ENCODE measurements at regions of chr2 and their contacts with region 1.

Region 1: DNA sequence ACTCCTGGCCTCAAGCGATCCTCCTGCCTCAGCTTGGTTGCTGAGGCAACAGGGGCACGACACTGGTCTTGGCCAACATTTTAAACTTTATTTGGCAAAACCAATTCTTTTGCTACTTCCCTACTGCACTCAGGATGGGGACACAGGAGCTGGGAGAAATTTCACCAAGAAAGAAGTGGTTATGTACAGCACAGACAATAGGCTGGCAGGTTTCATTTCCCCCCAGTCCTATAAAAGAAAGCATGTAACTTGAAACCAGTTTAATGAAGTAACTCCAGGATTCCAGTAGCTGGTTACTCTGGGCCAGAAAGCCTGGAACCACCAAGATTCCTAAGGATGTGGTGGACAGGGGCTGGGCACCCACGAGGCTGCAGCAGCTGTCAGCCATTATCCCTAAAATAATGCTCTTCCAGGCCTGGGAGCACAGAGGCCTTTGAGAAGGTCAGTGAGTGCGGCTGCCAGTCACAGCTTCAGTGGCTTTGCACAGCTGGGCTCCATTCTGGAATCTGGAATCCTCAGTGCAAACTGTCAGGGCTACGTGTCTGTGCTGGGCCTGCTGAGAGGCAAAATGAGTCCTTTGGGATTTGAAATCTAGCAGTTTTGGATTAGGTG is 142.3 kb upstream of the ITGA6 start:
- DNase-seq: peak; percentile 28
- H3K4me3 ChIP-seq: no peak overlapping the region
- H3K27ac ChIP-seq: peak overlapping the region; percentile 26
- H3K4me1 ChIP-seq: peaks cover 54% of the 10 kb centered on the region
- H3K27me3 ChIP-seq: no peaks in the 10 kb centered on the region
- CTCF ChIP-seq: no peak

Region 2: GRCh38 chr2:172179045-172179701 is 105.9 kb before region 1 on chr2:
- CTCF ChIA-PET with region 1: no interaction called
- dilution Hi-C with region 1: no loop called
- in situ Hi-C with region 1: loop called (anchors 10 kb)
- intact Hi-C with region 1: loop called (anchors 2 kb)
- DNase-seq: peak; percentile 98
- H3K4me3 ChIP-seq: no peak overlapping the region
- H3K27ac ChIP-seq: peak overlapping the region; percentile 11
- H3K4me1 ChIP-seq: peaks cover 33% of the 10 kb centered on the region
- H3K27me3 ChIP-seq: no peaks in the 10 kb centered on the region
- CTCF ChIP-seq: no peak

Region 3: DNA sequence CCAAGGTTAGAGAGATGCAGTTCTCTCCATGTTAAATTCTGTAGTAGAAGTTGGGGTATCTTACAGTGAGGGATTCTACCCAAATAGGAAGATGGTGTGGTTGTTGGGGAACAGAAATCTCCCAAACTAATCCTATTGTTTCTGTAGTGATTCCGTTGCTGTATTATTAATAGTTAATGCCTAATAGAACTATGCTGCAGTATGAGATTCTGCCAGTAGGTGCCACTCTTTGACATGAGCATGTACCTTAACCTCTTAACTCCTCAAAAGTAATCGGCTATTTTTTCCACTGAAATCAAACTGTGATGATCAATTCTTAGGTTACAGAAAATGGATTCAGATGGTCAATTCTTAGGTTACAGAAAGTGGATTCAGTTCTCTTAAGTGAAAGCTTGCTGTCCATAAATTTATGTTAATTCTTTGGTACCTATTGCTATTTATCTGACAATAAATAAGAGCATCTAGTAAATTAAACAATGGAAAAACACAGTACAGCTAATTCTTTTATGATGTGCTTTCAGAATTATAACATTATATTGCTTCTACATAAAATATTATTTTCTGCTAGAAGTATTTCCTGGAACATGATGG is 84.5 kb before region 1 on chr2:
- CTCF ChIA-PET with region 1: no interaction called
- dilution Hi-C with region 1: no loop called
- in situ Hi-C with region 1: no loop called
- intact Hi-C with region 1: loop called (anchors 1 kb)
- DNase-seq: peak; percentile 47
- H3K4me3 ChIP-seq: no peak overlapping the region
- H3K27ac ChIP-seq: no peak overlapping the region
- H3K4me1 ChIP-seq: peaks cover 35% of the 10 kb centered on the region
- H3K27me3 ChIP-seq: no peaks in the 10 kb centered on the region
- CTCF ChIP-seq: peak; percentile 67 to 76

Region 4: DNA sequence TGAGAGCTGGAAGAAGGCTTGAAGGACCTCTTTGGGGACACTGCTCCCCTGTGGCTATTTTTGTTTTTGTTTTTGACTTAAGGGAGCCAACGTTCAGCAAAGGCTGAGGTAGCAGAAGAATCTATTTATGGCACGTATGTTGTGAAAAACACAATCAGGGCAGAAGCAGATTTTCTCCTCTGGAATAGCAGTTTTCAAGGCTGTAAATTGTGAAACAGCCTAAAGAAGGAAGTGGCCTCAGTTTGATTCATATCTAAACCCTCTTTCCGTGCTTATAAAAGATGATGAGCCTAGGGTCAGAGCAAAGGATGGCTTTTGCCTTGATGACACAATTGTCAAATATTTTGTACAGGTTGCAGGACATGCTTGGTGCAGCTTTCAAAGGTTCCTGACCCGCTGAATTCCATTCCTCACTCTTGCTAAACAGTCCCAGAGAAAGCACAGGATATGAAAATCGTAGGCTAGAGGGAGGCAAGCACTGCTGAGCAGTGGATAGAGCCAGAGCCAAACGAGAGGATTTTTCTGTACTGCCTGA is 76.3 kb before region 1 on chr2:
- CTCF ChIA-PET with region 1: interaction called, 3 read pairs
- dilution Hi-C with region 1: no loop called
- in situ Hi-C with region 1: no loop called
- intact Hi-C with region 1: loop called (anchors 2 kb)
- DNase-seq: peak; percentile 80
- H3K4me3 ChIP-seq: no peak overlapping the region
- H3K27ac ChIP-seq: peak overlapping the region; percentile 47
- H3K4me1 ChIP-seq: peaks cover 28% of the 10 kb centered on the region
- H3K27me3 ChIP-seq: no peaks in the 10 kb centered on the region
- CTCF ChIP-seq: peak in 1 of 2 donors; percentile 28

Region 5: GRCh38 chr2:172380436-172381274 is 95.5 kb after region 1 on chr2:
- CTCF ChIA-PET with region 1: no interaction called
- dilution Hi-C with region 1: no loop called
- in situ Hi-C with region 1: no loop called
- intact Hi-C with region 1: no loop called
- DNase-seq: no peak
- H3K4me3 ChIP-seq: no peak overlapping the region
- H3K27ac ChIP-seq: no peak overlapping the region
- H3K4me1 ChIP-seq: no peaks in the 10 kb centered on the region
- H3K27me3 ChIP-seq: no peaks in the 10 kb centered on the region
- CTCF ChIP-seq: no peak

Region 6: GRCh38 chr2:172404824-172405223 is 119.7 kb after region 1 on chr2:
- CTCF ChIA-PET with region 1: no interaction called
- dilution Hi-C with region 1: no loop called
- in situ Hi-C with region 1: no loop called
- intact Hi-C with region 1: loop called (anchors 5 kb)
- DNase-seq: peak; percentile 82
- H3K4me3 ChIP-seq: no peak overlapping the region
- H3K27ac ChIP-seq: peak overlapping the region; percentile 52
- H3K4me1 ChIP-seq: peaks cover 60% of the 10 kb centered on the region
- H3K27me3 ChIP-seq: no peaks in the 10 kb centered on the region
- CTCF ChIP-seq: no peak

Region 7: GRCh38 chr2:172427256-172427989 is 142.3 kb after region 1 on chr2 and contains the start of gene ITGA6:
- CTCF ChIA-PET with region 1: interaction called, 3 read pairs
- dilution Hi-C with region 1: no loop called
- in situ Hi-C with region 1: no loop called
- intact Hi-C with region 1: loop called (anchors 1 kb)
- DNase-seq: peak; percentile 91
- H3K4me3 ChIP-seq: peak within 1 kb of the TSS; percentile 86 to 95 (median 87)
- H3K27ac ChIP-seq: peak within 1 kb of the TSS; percentile 93
- H3K4me1 ChIP-seq: peaks cover 23% of the 10 kb centered on the region
- H3K27me3 ChIP-seq: no peaks in the 10 kb centered on the region
- CTCF ChIP-seq: peak in 1 of 2 donors; percentile 24
- total RNA-seq, gene ITGA6: 562 to 887 TPM

Region 8: DNA sequence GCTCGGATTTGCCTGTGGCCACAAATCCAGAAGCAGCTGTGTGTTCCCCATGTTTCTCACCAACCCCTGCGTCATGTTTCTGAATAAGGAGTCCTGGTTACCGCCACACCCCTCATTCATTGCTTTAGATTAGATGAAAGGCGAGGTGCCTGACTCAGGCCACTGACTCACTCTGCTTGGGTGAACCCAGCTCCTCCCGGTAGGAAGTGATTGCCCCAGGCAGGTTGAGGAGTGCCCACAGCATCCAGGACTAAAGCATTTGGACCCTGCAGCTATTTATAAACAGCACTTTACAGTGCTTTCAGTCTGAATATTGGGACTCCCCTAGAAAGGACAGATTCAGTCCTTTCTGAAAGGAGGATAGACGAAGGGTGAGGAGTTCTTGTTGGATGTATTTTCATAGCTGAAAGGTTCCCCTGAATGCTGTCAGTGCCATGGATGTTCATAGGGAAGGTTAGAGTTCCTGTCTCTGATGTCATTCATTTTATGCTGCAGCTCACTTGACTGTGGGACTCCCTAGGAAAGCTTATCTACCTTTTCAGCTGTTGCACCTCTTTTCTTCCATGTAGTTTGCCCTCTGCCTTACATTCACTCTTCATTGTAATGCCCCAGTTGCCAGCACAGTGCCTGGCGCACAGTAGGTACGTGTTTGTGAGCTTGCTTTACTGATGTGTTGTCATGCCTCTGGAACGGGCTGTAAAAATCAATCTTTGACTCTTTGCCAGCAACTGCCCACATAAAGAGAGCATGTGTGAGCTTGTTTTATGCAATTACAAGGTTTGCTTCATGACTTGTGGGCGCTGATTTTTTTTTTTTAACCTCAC is 157.2 kb after region 1 on chr2:
- CTCF ChIA-PET with region 1: interaction called, 4 read pairs
- dilution Hi-C with region 1: no loop called
- in situ Hi-C with region 1: no loop called
- intact Hi-C with region 1: loop called (anchors 5 kb)
- DNase-seq: peak; percentile 100
- H3K4me3 ChIP-seq: peak overlapping the region in 1 of 3 experiments; percentile 19
- H3K27ac ChIP-seq: peak overlapping the region; percentile 99
- H3K4me1 ChIP-seq: peaks cover 79% of the 10 kb centered on the region
- H3K27me3 ChIP-seq: no peaks in the 10 kb centered on the region
- CTCF ChIP-seq: no peak